ENCODE measurements at regions of chr10 and their contacts with region 1.

Region 1: DNA sequence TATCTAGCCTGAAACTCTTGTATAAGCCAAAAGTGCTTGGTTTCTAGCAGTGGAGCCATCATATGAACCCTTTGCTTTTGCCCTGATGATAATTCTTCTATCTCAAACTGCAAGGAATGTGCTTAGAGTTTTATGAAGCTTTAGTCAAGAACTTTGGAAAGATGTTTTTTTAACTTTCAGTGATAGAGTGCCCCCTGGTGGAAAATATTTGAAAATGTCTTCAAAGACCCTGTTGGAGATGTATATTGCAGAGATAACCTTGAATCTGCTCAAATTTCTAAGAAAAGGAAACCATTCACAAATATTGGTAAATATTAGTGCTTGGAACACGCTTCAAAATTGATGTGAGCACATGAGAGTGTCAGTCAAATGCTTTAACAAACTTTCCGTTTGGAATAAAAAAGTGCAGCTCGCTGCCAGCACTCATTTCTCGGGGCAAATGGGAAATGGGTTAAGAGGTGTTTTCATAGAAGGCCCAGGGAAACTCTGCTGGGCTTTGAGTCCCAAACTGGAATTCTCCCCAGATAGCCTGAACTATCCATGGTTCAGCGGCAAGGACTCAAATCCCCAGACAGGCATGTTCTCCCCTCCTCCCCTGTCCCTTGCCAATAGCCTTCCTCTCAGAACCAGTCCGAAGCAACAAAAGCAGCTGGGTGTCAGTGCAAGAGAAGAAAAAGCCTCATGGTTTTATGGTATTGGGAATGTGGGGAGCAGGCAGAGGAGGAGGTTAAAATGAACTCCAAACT is 129.3 kb downstream of the MYOF start:
- DNase-seq: peak in 3 of 14 experiments; percentile 47 to 58 (median 50)
- ATAC-seq: no peak
- H3K4me3 ChIP-seq: no peak overlapping the region
- H3K4me3 Mint-ChIP-seq: no peak overlapping the region
- H3K27ac ChIP-seq: no peak overlapping the region
- H3K27ac Mint-ChIP-seq: no peak overlapping the region
- H3K4me1 ChIP-seq: no peaks in the 10 kb centered on the region
- H3K4me1 Mint-ChIP-seq: no peaks in the 10 kb centered on the region
- H3K27me3 ChIP-seq: peaks cover 0 to 5% of the 10 kb centered on the region in 2 experiments
- H3K27me3 Mint-ChIP-seq: peaks cover 30% of the 10 kb centered on the region
- CTCF ChIP-seq: peak; percentile 85

Region 2: DNA sequence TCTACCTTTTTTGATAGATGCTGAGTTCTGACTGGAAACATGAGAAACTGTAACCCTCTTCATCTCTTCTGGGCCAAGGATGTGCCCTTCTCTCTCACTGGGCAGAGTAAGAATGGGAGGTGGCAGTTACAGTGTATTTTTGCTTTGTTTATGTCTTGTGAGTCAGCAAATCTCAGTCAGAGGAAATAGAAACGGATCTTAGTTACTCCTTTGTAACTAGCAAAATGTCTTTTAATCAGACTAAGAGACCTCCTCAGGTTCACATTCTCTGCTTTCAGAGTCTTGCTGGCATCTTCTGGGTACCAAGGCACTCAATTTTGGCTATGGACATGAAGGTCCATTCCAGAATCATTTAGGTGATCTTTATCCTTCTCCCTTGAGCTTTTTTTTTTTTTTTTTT is 592.2 kb before region 1 on chr10:
- CTCF ChIA-PET with region 1: no interaction called
- POLR2A ChIA-PET with region 1: no interaction called
- intact Hi-C with region 1: no loop called
- DNase-seq: no peak
- ATAC-seq: no peak
- H3K4me3 ChIP-seq: no peak overlapping the region
- H3K4me3 Mint-ChIP-seq: no peak overlapping the region
- H3K27ac ChIP-seq: no peak overlapping the region
- H3K27ac Mint-ChIP-seq: no peak overlapping the region
- H3K4me1 ChIP-seq: peaks cover 5% of the 10 kb centered on the region
- H3K4me1 Mint-ChIP-seq: peaks cover 8% of the 10 kb centered on the region
- H3K27me3 ChIP-seq: peaks cover 0 to 5% of the 10 kb centered on the region in 2 experiments
- H3K27me3 Mint-ChIP-seq: peaks cover 19% of the 10 kb centered on the region
- CTCF ChIP-seq: no peak

Region 3: GRCh38 chr10:92880233-92880861 is 472.5 kb before region 1 on chr10:
- CTCF ChIA-PET with region 1: no interaction called
- POLR2A ChIA-PET with region 1: no interaction called
- intact Hi-C with region 1: loop called in 1 of 2 experiments (anchors 1 kb)
- DNase-seq: peak in 4 of 14 experiments; percentile 13 to 56 (median 56)
- ATAC-seq: peak; percentile 39
- H3K4me3 ChIP-seq: no peak overlapping the region
- H3K4me3 Mint-ChIP-seq: no peak overlapping the region
- H3K27ac ChIP-seq: no peak overlapping the region
- H3K27ac Mint-ChIP-seq: no peak overlapping the region
- H3K4me1 ChIP-seq: peaks cover 5% of the 10 kb centered on the region
- H3K4me1 Mint-ChIP-seq: peaks cover 29% of the 10 kb centered on the region
- H3K27me3 ChIP-seq: no peaks in the 10 kb centered on the region
- H3K27me3 Mint-ChIP-seq: no peaks in the 10 kb centered on the region
- CTCF ChIP-seq: peak; percentile 75

Region 4: DNA sequence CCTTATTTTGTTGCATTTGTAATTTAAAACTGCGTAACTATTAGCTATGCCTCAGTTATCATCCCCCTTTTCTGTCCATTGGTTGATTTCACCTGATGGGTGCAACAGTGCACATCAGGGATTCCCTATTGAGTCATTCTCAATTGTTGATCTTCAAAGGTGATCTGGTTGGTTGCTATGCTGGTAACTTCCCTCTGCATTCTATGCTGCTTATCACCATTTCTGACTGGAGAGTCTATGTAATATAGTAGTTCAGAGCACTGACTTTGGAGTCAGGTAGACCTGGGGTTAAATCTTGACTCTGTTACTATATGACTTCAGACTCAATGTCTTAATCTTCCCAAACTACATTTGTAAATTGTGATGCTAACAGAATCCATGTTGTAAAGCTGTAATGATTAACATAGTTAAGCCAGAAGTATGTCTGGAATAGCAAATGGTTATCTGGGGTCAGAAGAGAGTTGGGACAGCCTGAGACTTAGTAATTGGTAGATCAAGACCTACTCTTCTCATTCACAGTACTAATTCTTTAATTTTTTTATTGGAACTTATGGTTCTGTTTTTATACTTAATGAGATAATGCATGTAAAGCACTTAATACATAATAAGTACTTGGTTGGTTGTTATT is 466.4 kb before region 1 on chr10:
- CTCF ChIA-PET with region 1: interaction called, 3 read pairs
- POLR2A ChIA-PET with region 1: no interaction called
- intact Hi-C with region 1: loop called (anchors 1 to 2 kb)
- DNase-seq: no peak
- ATAC-seq: no peak
- H3K4me3 ChIP-seq: no peak overlapping the region
- H3K4me3 Mint-ChIP-seq: no peak overlapping the region
- H3K27ac ChIP-seq: no peak overlapping the region
- H3K27ac Mint-ChIP-seq: no peak overlapping the region
- H3K4me1 ChIP-seq: no peaks in the 10 kb centered on the region
- H3K4me1 Mint-ChIP-seq: peaks cover 14% of the 10 kb centered on the region
- H3K27me3 ChIP-seq: no peaks in the 10 kb centered on the region
- H3K27me3 Mint-ChIP-seq: no peaks in the 10 kb centered on the region
- CTCF ChIP-seq: no peak

Region 5: DNA sequence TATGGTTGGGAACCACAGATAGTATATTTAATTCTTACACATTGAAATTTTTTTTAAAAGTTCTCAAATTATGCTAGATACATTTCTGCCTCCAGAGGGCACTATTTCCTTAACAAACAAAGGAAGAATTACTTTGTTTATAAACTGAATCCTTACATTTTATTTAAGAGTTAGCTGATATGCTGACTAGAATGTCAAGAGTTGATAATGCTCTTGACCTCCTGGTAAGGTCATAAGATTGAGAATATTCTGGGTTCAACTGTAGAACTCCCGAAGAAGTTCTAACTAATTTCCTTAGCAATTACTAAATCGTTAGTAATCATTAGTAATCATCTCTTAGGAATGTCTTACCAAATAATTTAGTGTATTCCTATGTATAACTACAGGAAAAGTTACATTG is 387.5 kb before region 1 on chr10:
- CTCF ChIA-PET with region 1: no interaction called
- POLR2A ChIA-PET with region 1: interaction called, 3 read pairs
- intact Hi-C with region 1: loop called (anchors 1 to 5 kb)
- DNase-seq: peak in 3 of 14 experiments; percentile 33 to 49 (median 42)
- ATAC-seq: no peak
- H3K4me3 ChIP-seq: no peak overlapping the region
- H3K4me3 Mint-ChIP-seq: no peak overlapping the region
- H3K27ac ChIP-seq: no peak overlapping the region
- H3K27ac Mint-ChIP-seq: no peak overlapping the region
- H3K4me1 ChIP-seq: no peaks in the 10 kb centered on the region
- H3K4me1 Mint-ChIP-seq: no peaks in the 10 kb centered on the region
- H3K27me3 ChIP-seq: no peaks in the 10 kb centered on the region
- H3K27me3 Mint-ChIP-seq: no peaks in the 10 kb centered on the region
- CTCF ChIP-seq: peak; percentile 74

Region 6: DNA sequence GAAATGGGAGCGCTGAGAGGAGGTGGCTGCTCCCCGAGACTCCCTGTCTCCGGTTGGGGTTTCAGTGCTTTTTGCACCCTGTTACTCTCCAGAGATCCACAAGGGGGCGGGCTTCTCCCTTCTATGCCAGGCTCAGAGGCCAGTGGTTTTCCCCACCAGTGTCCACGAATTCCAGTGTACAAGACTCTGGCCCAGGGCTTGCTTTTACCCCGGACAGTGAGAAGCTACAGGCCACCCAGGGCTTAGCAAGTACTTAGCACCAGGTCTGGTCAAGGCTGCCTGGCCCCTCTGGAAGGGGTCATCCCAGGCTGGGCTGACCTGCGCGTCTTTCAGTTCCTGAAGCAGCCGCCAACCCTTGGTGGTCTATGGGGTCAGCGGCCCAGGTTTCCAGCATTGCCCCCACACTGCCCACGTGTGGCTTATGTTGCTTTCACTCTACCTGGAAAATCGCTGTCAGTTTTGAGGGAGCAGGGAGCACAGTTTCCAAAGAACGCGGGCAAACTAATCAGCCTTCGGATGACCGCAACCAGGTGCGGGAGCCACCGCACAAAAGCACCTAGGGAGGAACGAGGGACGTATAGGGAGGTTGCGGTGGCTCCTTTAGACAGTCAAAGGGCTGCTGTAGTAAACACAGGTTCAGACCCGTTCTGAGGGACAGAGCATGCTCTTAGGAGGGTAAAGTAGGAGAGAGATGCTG is 272.3 kb before region 1 on chr10:
- CTCF ChIA-PET with region 1: no interaction called
- POLR2A ChIA-PET with region 1: no interaction called
- intact Hi-C with region 1: loop called (anchors 1 to 2 kb)
- DNase-seq: peak; percentile 27 to 70 (median 38)
- ATAC-seq: peak; percentile 64
- H3K4me3 ChIP-seq: no peak overlapping the region
- H3K4me3 Mint-ChIP-seq: peak overlapping the region; percentile 23
- H3K27ac ChIP-seq: no peak overlapping the region
- H3K27ac Mint-ChIP-seq: no peak overlapping the region
- H3K4me1 ChIP-seq: peaks cover 7% of the 10 kb centered on the region
- H3K4me1 Mint-ChIP-seq: peaks cover 5% of the 10 kb centered on the region
- H3K27me3 ChIP-seq: peaks cover 24 to 38% of the 10 kb centered on the region in 2 experiments
- H3K27me3 Mint-ChIP-seq: peaks cover 57% of the 10 kb centered on the region
- CTCF ChIP-seq: peak; percentile 76

Region 7: DNA sequence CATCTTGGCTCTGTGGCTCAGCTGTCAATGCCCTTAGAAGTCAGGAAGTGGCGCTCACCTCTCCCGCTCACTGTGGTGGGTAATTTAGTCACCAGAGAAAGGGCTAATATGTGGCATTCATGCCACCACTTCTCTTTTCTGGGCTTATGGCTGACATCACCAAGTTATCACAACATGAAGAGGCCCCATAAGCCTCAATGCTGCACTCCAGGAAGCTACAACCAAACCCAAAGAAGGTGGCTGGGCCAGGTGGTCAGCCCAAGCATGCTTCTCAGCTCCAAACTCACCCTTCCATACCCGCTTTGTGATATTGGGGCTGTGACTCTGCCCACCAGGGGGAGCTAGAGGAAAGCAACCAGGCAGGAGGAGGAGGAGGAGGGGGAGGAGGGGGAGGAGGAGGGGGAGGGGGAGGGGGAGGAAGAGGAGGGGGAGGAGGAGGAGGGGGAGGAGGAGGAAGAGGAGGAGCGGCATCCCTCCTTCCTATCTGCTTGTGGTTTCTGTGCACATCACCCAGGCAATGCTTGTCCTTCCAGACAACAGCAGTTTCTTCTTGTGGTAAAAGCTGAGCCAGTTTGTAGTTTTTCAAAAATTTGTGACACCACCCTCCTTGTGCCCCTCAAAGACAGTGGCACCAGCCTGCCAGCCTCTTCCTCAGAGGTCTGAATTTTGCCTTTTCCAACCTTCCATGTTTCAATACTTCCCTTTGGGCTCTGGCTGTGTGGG is 237.0 kb before region 1 on chr10:
- CTCF ChIA-PET with region 1: interaction called, 3 read pairs
- POLR2A ChIA-PET with region 1: no interaction called
- intact Hi-C with region 1: loop called (anchors 1 kb)
- DNase-seq: peak; percentile 58 to 86 (median 64)
- ATAC-seq: peak; percentile 79
- H3K4me3 ChIP-seq: no peak overlapping the region
- H3K4me3 Mint-ChIP-seq: peak overlapping the region; percentile 1
- H3K27ac ChIP-seq: no peak overlapping the region
- H3K27ac Mint-ChIP-seq: no peak overlapping the region
- H3K4me1 ChIP-seq: peaks cover 14% of the 10 kb centered on the region
- H3K4me1 Mint-ChIP-seq: peaks cover 17% of the 10 kb centered on the region
- H3K27me3 ChIP-seq: no peaks in the 10 kb centered on the region
- H3K27me3 Mint-ChIP-seq: peaks cover 20% of the 10 kb centered on the region
- CTCF ChIP-seq: peak; percentile 49